ENCODE measurements at regions of chr1 and their contacts with region 1.

Region 1: GRCh38 chr1:40612345-40612831 is 53.1 kb downstream of the RIMS3 start:
- DNase-seq: peak; percentile 64 to 75
- ATAC-seq: peak; percentile 77

Region 2: GRCh38 chr1:40668769-40669525 is 56.6 kb after region 1 on chr1:
- intact Hi-C with region 1: loop called in 1 of 2 experiments (anchors 10 kb)
- DNase-seq: peak; percentile 81 to 88
- ATAC-seq: peak; percentile 59

Region 3: DNA sequence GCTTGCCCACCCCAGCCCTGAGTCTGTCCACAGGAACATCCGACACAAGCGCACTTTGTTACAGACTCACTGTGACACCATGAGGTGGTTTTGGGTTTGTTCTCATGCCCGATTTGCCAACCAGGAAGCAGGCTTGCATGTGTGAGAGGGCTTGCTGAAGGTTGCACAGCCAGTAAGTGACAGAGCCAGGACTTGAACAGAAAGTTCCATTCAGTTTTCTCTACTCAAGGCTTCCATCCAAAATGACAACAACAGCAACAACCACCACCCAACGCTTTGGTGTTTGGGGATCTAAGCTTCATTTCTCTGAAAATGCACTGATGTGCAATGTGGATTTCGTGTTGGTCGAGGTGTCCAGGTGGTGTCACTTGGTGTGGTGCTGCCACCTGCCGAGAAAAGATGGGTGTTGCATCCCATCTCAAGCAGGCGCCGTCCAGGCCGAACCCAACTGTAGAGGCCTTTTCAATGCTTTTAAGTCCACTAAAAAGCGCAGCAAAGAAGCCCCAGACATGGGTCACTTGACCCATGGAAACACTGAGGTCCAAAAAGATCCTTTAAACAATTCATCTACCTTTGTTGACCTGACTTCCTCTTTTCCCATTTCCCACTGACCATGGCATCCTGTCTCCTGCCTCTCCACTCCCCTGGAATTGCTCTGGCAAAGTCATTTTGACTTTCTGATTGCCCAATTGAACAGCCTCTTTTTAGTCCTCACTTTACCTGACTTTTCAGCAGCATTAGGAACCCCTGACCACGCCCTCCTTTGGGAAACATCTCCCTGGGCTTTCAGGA is 237.6 kb after region 1 on chr1:
- intact Hi-C with region 1: loop called in 1 of 2 experiments (anchors 10 kb)
- DNase-seq: peak in 1 of 2 donors; percentile 72
- ATAC-seq: peak; percentile 83

Measured in left colon (tissue), 2 donors.